ENCODE measurements at regions of chrX and their contacts with region 1.

Region 1: GRCh38 chrX:97685753-97686152 is 802.0 kb downstream of the RPA4 start:
- DNase-seq: no peak
- H3K4me3 ChIP-seq: no peak overlapping the region
- H3K27ac ChIP-seq: no peak overlapping the region
- H3K4me1 ChIP-seq: no peaks in the 10 kb centered on the region
- H3K27me3 ChIP-seq: no peaks in the 10 kb centered on the region
- CTCF ChIP-seq: peak in 8 of 11 experiments; percentile 24 to 50 (median 48)
- POLR2A ChIP-seq: no peak

Region 2: DNA sequence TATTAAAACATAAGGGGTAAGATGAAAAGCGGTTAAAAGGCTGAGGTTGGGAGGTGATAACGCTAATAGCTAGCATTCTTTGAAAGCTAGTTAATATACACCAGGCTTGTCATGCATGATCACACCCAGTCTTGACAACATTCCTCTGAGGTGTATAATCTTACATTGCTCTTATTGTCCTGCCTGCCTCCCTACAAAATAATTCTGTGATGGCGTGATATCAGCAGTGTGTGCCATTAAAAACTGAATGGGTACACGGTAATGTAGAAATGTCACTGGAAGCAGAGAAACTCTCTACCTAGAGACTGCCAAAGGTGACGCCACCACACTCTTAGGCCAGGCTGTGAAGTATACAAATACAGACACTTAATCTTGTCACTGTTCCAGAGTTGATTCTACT is 933.0 kb before region 1 on chrX:
- intact Hi-C with region 1: loop called (anchors 10 kb)
- DNase-seq: no peak
- H3K4me3 ChIP-seq: no peak overlapping the region
- H3K27ac ChIP-seq: no peak overlapping the region
- H3K4me1 ChIP-seq: no peaks in the 10 kb centered on the region
- H3K27me3 ChIP-seq: peaks cover 0 to 4% (median 0%) of the 10 kb centered on the region in 7 donors
- CTCF ChIP-seq: no peak
- POLR2A ChIP-seq: no peak

Region 3: DNA sequence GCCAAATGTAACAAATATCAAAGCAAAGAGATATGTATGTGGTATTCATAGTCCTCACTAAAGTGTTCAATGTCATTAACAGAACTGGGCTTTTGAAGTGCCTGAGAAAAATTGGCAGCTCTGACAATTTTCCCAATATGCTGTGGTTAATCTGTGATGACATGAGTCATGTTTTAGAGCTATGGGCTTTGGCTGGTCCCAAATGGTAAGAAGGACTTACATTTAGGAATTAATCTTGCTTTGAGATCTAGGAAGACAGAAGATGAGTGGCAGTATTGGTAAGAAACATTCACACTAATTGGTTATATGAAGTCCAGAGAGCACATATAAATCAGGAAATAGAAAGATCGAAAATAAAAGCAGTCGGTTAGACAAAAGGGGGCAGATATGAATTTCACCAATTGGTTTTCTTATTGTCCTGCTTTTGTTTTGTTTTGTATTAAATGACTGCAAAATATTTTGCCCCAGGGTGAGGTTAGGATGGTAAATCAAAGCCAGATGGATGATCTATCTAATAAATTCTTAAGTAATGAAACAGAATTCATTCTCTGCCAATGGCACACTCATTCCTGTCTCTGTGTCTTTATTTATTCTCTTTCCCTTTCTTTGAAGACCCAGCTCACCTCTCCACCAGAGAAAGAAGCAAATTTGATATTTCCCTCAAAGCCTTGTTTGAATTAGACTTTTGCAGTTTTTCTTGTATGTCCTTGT is 191.1 kb after region 1 on chrX:
- intact Hi-C with region 1: no loop called
- DNase-seq: no peak
- H3K4me3 ChIP-seq: no peak overlapping the region
- H3K27ac ChIP-seq: no peak overlapping the region
- H3K4me1 ChIP-seq: no peaks in the 10 kb centered on the region
- H3K27me3 ChIP-seq: no peaks in the 10 kb centered on the region
- CTCF ChIP-seq: no peak
- POLR2A ChIP-seq: no peak